ENCODE measurements at regions of chr4 and their contacts with region 1.

Region 1: DNA sequence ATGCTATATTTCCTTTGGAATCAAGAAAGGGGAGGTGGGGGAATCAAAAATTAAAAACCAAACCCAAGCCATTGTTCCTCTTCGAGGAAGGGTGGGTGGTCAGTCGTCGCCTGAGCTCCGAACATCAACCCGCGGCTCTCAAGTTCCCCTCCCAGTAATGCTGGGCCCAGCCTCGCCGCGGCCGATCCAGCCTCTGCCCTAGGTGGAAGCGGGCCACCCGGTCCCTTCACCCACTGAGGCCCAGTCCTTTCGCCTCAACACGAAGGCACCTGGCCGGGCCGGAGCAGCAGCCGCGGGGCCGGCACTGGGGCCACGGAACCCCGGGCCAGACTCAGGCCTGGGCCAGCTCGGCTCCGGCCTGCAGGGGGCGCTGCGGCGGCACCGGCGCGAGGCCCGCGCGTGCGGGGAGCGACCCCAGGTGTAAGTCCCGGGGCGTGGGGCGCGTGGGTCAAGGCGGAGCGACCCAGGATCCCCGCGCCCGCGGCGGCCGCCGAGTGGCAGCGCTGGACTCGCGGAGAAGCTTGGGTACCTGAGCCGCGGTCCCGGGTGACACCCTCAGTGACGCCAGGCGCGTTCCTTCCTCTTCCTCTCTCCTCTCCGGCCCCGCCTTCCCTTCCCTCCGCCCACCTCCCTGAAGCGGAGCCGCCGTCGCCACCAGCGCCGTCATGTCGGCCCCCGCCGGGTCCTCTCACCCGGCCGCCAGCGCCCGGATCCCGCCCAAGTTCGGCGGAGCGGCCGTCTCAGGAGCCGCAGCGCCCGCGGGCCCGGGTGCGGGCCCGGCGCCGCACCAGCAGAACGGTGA is at the start of gene SEC24B:
- DNase-seq: peak; percentile 92
- H3K4me3 Mint-ChIP-seq: peak within 1 kb of the TSS; percentile 82
- H3K27ac Mint-ChIP-seq: peak within 1 kb of the TSS; percentile 85
- H3K4me1 Mint-ChIP-seq: peaks cover 62% of the 10 kb centered on the region
- H3K27me3 Mint-ChIP-seq: no peaks in the 10 kb centered on the region
- total RNA-seq, gene SEC24B: 20.6 to 21.1 TPM

Region 2: GRCh38 chr4:109448828-109449227 is 15.4 kb after region 1 on chr4:
- CTCF ChIA-PET with region 1: interaction called, 5 read pairs
- intact Hi-C with region 1: loop called (anchors 1 kb)
- DNase-seq: no peak
- H3K4me3 Mint-ChIP-seq: no peak overlapping the region
- H3K27ac Mint-ChIP-seq: no peak overlapping the region
- H3K4me1 Mint-ChIP-seq: peaks cover 36% of the 10 kb centered on the region
- H3K27me3 Mint-ChIP-seq: no peaks in the 10 kb centered on the region

Region 3: DNA sequence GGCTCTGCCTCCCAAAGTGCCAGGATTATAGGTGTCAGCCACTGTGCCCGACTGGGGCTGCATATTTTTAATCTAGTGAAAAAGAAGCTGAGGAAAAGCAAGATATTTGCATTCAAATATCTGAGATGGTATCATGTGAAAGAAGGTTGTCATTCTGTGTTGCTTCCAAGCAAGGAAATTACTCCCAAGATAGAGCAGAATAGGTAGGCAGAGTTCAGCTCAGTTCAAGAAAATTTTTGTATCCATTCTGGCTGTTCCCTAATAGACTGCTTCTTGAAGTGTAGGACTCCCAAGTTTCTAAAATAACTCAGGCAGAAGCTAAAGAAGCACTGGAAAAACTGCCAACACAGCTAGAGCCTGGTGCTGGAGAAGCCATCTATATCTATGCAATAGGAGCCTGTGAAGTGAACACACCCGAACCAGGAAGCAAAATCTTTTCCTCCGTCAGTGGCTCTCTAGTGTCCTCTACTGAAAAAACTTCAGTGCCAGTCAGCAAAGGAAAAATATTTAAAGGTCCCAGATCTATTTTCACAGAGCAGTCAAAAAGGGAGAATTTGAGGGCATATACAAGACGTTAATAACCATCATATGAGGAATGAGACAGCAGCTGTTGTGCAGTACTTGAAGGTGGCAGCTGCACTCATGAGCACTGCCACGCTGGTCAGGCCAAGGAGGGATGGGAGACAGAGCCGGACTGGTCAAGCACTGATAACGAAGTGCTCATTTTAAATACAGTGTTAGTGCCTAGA is 140.9 kb after region 1 on chr4:
- CTCF ChIA-PET with region 1: interaction called, 10 read pairs
- intact Hi-C with region 1: loop called (anchors 1 kb)
- DNase-seq: peak; percentile 42
- H3K4me3 Mint-ChIP-seq: peak overlapping the region; percentile 39
- H3K27ac Mint-ChIP-seq: no peak overlapping the region
- H3K4me1 Mint-ChIP-seq: peaks cover 74% of the 10 kb centered on the region
- H3K27me3 Mint-ChIP-seq: no peaks in the 10 kb centered on the region

Region 4: DNA sequence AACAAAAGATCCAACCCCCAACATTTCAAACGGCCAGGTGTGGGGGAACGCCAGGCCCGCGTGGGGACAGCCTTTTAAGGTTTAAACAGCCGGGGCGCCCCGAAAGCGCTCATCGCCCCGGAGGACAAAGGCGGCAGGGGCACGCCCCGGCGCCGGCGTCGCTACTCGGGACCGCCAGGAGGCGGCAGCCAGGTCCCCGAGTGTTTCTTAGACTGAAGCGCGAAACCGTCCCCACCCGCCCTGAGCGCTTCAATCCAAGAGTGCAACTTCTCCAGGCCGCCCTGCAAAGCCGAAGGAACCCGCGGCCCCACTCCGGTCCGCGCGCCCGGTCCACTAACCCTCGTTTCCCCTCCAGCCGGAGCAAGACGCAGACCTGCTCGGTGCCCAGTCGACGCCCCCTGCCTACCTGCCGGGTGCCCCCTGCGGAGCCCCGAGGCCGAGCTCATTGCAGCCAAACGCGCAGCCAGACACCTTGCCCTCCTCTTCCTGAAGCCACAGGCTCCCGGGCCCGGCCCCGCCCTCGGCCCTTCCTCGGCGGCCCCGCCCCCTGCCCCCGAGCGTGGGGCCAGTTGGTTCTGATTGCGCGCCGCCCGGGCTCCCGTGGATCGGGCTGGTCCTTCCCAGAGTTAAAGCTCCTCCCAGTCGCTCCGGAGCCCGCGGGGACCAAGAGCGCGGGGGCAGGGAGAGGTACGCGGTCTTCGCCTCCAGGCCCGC is 269.7 kb after region 1 on chr4 and contains the start of gene CASP6:
- CTCF ChIA-PET with region 1: interaction called, 11 read pairs
- intact Hi-C with region 1: loop called (anchors 1 kb)
- DNase-seq: peak; percentile 76
- H3K4me3 Mint-ChIP-seq: peak within 1 kb of the TSS; percentile 86
- H3K27ac Mint-ChIP-seq: peak within 1 kb of the TSS; percentile 82
- H3K4me1 Mint-ChIP-seq: peaks cover 28% of the 10 kb centered on the region
- H3K27me3 Mint-ChIP-seq: no peaks in the 10 kb centered on the region
- total RNA-seq, gene CASP6: 11.5 to 12.1 TPM

Region 5: GRCh38 chr4:109815151-109816081 is 382.0 kb after region 1 on chr4 and contains the start of gene GAR1:
- CTCF ChIA-PET with region 1: interaction called, 3 read pairs
- intact Hi-C with region 1: loop called (anchors 1 kb)
- DNase-seq: peak; percentile 93
- H3K4me3 Mint-ChIP-seq: peak within 1 kb of the TSS; percentile 99
- H3K27ac Mint-ChIP-seq: peak within 1 kb of the TSS; percentile 95
- H3K4me1 Mint-ChIP-seq: peaks cover 47% of the 10 kb centered on the region
- H3K27me3 Mint-ChIP-seq: no peaks in the 10 kb centered on the region
- total RNA-seq, gene GAR1: 18.9 to 24.4 TPM

Region 6: GRCh38 chr4:109947457-109947856 is 514.1 kb after region 1 on chr4:
- CTCF ChIA-PET with region 1: no interaction called
- intact Hi-C with region 1: loop called (anchors 1 kb)
- DNase-seq: no peak
- H3K4me3 Mint-ChIP-seq: no peak overlapping the region
- H3K27ac Mint-ChIP-seq: peak overlapping the region; percentile 65
- H3K4me1 Mint-ChIP-seq: peaks cover 27% of the 10 kb centered on the region
- H3K27me3 Mint-ChIP-seq: no peaks in the 10 kb centered on the region

Measured in activated naive CD4-positive, alpha-beta T cell treated with anti-CD3 and anti-CD28 coated beads for 36 hours (primary cell).